ENCODE measurements at regions of chr4 and their contacts with region 1.

Region 1: GRCh38 chr4:1579901-1580691 is 104.0 kb downstream of the FAM53A start:
- DNase-seq: peak; percentile 89
- ATAC-seq: peak; percentile 83
- H3K4me3 Mint-ChIP-seq: peak overlapping the region; percentile 81
- H3K27ac Mint-ChIP-seq: peak overlapping the region; percentile 79
- H3K4me1 Mint-ChIP-seq: peaks cover 4% of the 10 kb centered on the region
- H3K27me3 Mint-ChIP-seq: no peaks in the 10 kb centered on the region
- CTCF ChIP-seq: no peak

Region 2: GRCh38 chr4:337143-337931 is 1242.8 kb before region 1 on chr4 and contains the start of gene ZNF141:
- CTCF ChIA-PET with region 1: no interaction called
- POLR2A ChIA-PET with region 1: no interaction called
- intact Hi-C with region 1: loop called (anchors 5 kb)
- DNase-seq: peak; percentile 78
- ATAC-seq: peak; percentile 92
- H3K4me3 Mint-ChIP-seq: peak within 1 kb of the TSS; percentile 100
- H3K27ac Mint-ChIP-seq: peak within 1 kb of the TSS; percentile 99
- H3K4me1 Mint-ChIP-seq: peaks cover 38% of the 10 kb centered on the region
- H3K27me3 Mint-ChIP-seq: no peaks in the 10 kb centered on the region
- CTCF ChIP-seq: no peak
- total RNA-seq, gene ZNF141: 36.9 and 47.8 TPM in 2 replicates

Region 3: DNA sequence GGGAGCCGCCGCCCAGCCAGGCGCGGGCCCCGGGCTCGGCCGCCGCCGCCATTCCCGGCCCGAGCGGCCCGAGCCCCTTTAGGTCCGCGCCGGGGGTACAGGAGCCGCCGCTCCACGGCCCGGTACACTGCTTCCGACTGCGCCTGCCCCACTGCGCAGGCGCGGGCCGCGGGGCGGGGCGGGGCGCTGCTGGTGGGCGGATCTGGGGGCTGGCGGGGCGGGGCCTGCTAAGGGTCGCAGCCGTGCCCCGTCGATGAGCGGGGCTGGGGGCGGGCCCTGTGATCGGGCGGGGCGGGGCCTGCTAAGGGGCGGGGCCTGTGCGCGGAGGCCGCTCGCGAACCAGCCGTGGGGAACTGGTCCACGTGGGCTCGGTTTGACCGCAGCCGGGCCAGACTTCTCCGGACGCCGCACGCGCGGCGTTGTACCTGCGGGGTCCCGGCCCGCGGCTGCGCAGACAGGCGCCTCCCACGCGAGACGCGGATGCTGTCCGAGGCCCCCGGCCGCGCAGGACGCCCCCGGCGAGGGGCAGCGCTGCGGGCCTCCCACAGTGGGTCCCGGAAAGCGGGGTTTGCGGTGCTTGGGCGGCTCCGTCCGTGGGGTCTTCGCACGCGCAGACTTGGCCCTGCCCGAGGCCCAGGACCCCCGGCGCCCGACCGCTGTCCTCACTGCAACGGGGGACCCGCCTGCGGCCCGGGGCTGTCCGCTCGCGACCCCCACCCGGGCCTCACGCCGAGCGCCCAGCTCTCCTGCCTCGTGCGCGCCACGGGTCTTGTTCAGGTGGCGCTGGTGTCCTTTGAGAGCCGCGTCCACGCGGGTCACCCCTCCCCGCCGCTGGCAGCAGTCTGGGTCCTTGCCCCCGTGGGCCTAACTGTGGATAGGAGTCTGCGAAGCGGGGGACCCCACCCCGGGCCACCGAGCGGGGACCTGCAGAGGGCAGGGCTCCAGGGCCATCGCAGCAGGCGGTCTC is 606.4 kb before region 1 on chr4 and contains the start of gene DGKQ:
- CTCF ChIA-PET with region 1: no interaction called
- POLR2A ChIA-PET with region 1: no interaction called
- intact Hi-C with region 1: loop called (anchors 2 kb)
- DNase-seq: peak; percentile 87
- ATAC-seq: peak; percentile 98
- H3K4me3 Mint-ChIP-seq: peak within 1 kb of the TSS; percentile 60
- H3K27ac Mint-ChIP-seq: no peak within 1 kb of the TSS
- H3K4me1 Mint-ChIP-seq: peaks cover 13% of the 10 kb centered on the region
- H3K27me3 Mint-ChIP-seq: no peaks in the 10 kb centered on the region
- CTCF ChIP-seq: no peak
- total RNA-seq, gene DGKQ: 16.3 and 16.4 TPM in 2 replicates

Region 4: DNA sequence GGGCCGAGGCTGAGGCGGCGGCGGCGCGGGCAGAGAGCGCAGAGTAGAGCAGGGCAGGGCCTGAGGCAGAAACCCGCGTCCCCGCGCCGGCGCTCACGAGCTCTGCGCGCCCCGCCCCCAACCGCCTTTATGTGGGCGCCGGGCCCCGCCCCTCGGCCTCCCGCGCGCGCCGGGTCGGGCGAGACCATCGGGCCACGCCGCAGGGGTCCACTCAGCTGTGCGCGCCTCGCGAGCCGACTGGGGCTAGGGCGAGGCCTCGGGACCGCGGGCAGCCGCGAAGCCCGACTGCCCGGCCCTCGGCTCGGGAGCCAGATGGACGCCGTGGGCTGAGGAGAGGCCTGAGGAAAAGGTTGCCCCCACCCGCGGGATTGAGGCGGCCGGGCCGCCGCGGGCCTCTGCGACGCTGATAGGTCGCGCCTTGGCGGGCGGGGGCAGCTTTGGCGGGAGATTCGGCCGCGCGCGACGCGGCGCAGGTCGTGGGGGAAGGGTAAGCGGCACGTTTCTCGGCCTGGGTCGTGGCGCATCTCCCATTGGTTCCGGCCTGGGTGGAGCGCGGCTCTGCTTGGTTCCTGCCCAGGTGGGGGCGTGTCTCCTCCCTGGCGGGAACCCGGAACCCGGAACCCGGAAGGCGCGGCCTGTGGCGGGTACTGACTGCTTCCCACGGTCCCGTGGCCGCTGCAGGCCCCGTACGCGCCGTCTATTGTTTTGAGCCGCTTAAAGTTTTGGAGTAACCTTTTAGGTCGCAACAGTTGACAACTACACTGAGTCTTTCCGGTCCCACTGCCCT is 132.3 kb after region 1 on chr4 and contains the start of gene SLBP:
- CTCF ChIA-PET with region 1: no interaction called
- POLR2A ChIA-PET with region 1: no interaction called
- intact Hi-C with region 1: loop called (anchors 1 kb)
- DNase-seq: peak; percentile 97
- ATAC-seq: peak; percentile 87
- H3K4me3 Mint-ChIP-seq: peak within 1 kb of the TSS; percentile 94
- H3K27ac Mint-ChIP-seq: peak within 1 kb of the TSS; percentile 93
- H3K4me1 Mint-ChIP-seq: peaks cover 73% of the 10 kb centered on the region
- H3K27me3 Mint-ChIP-seq: no peaks in the 10 kb centered on the region
- CTCF ChIP-seq: no peak
- total RNA-seq, gene SLBP: 34.0 and 37.8 TPM in 2 replicates

Region 5: GRCh38 chr4:1870578-1871443 is 290.7 kb after region 1 on chr4 and contains the start of gene NSD2:
- CTCF ChIA-PET with region 1: no interaction called
- POLR2A ChIA-PET with region 1: no interaction called
- intact Hi-C with region 1: loop called (anchors 2 kb)
- DNase-seq: peak; percentile 90
- ATAC-seq: peak; percentile 66
- H3K4me3 Mint-ChIP-seq: peak within 1 kb of the TSS; percentile 86
- H3K27ac Mint-ChIP-seq: peak within 1 kb of the TSS; percentile 91
- H3K4me1 Mint-ChIP-seq: peaks cover 27% of the 10 kb centered on the region
- H3K27me3 Mint-ChIP-seq: no peaks in the 10 kb centered on the region
- CTCF ChIP-seq: no peak
- total RNA-seq, gene NSD2: 40.3 and 44.6 TPM in 2 replicates

Region 6: DNA sequence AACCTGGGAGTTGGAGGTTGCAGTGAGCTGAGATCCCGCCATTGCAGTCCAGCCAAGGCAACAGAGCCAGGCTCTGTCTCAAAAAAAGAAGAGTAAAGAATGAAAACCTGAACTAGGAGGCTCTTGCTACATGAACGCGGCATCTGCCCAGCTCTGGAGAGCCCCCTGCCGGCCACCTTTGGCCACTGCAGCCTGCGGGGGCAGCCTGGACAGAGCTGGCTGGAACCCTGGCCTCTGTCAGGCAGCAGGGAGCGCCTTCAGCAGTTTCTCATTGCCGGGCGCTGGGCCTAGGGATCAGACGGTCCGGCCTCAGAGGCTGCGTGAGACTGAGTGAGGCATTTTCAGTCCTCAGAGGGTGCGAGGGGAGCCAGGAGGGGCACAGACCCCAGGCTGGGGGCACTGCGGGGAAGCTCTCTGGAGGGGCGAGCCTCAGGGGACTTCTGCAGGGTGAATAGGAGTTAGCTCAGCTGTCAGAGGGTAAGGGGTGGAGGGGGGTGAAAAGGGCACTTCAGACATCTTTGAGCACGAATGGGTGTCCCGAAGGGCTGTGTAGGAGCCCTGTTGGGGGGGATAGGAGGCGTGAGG is 1900.5 kb after region 1 on chr4:
- CTCF ChIA-PET with region 1: no interaction called
- POLR2A ChIA-PET with region 1: no interaction called
- intact Hi-C with region 1: loop called (anchors 10 kb)
- DNase-seq: peak; percentile 81
- ATAC-seq: peak; percentile 47
- H3K4me3 Mint-ChIP-seq: no peak overlapping the region
- H3K27ac Mint-ChIP-seq: no peak overlapping the region
- H3K4me1 Mint-ChIP-seq: peaks cover 39% of the 10 kb centered on the region
- H3K27me3 Mint-ChIP-seq: peaks cover 2% of the 10 kb centered on the region
- CTCF ChIP-seq: peak; percentile 80